A549 (cell line): ENCODE measurements at regions of chr19 and their contacts with region 1.

Region 1: DNA sequence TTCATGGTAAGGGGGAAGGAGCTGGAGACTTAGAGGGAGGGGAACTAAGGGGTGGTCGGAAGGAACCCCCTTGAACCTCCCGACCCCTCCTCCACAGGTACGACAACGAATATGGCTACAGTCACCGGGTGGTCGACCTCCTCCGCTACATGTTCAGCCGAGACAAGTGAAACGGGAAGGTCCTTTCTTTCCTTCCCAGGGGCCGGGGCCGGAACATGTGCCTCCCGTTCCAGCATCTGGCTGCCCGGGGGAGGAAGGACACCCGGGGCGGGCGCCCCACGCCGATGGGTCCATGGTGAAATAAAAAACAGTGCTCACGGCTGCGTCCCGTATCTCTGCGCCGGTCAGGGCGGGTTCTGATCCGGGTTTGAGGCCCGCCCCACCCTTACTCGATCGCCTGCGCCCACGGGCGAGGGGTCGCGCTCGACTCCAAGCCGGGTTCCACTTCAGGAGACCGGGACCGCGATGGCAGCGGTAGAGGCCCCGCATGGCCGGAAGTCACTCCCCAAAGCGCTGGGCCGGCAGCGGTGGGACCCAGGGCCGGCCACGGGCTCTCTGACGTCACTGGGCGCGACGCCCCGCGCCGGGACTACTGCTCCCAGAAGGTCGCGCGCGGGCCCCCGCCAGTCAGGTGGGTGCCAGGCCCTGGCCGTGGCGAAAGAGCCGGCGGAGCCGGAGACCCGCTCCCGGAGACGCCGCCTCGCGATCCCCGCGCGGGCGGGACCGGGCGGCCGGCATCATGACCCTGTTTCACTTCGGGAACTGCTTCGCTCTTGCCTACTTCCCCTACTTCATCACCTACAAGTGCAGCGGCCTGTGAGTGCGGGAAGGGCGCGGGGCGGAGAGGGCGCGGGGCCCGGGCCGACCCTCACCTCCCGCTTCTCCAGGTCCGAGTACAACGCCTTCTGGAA is at the start of gene TMEM147:
- DNase-seq: peak; percentile 95 to 100
- ATAC-seq: peak; percentile 88 to 95
- H3K4me3 ChIP-seq: peak within 1 kb of the TSS; percentile 86
- H3K27ac ChIP-seq: peak within 1 kb of the TSS; percentile 88 to 93
- H3K4me1 ChIP-seq: peaks cover 14% of the 10 kb centered on the region
- CTCF ChIP-seq: no peak
- EP300 ChIP-seq: no peak
- POLR2A ChIP-seq: peak; percentile 95
- RAD21 ChIP-seq: no peak
- polyA plus RNA-seq, gene TMEM147: 335 and 446 TPM in 2 replicates

Region 2: DNA sequence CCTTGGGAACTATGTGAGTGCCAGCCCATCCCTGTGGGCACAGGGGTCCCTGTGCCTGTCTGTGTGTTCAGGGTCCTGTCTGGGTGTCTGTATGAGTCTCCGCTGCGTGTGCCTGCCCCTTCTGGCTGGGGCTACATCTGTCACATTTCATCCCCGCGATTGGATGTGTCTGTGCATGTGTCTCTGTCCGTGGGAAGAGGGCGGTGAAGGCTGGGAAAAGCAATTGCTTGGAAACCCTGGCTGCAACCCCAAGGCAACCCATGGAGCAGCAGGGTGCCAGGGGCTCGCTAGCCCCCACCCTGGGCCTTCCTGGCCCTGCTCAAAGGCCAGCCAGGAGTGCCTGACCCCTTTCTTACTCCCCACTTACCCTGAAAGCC is 251.9 kb before region 1 on chr19:
- CTCF ChIA-PET with region 1: no interaction called
- POLR2A ChIA-PET with region 1: no interaction called
- DNase-seq: no peak
- ATAC-seq: peak; percentile 17 to 20; a peak in 3 of 6 replicates
- H3K4me3 ChIP-seq: no peak overlapping the region
- H3K27ac ChIP-seq: no peak overlapping the region
- H3K4me1 ChIP-seq: no peaks in the 10 kb centered on the region
- CTCF ChIP-seq: no peak
- EP300 ChIP-seq: no peak
- POLR2A ChIP-seq: no peak
- RAD21 ChIP-seq: no peak

Region 3: GRCh38 chr19:35509861-35510625 is 35.2 kb before region 1 on chr19:
- CTCF ChIA-PET with region 1: interaction called, 81 read pairs
- POLR2A ChIA-PET with region 1: interaction called, 4 read pairs
- DNase-seq: peak; percentile 73 to 99
- ATAC-seq: peak; percentile 68 to 90
- H3K4me3 ChIP-seq: peak overlapping the region; percentile 48
- H3K27ac ChIP-seq: peak overlapping the region; percentile 57 to 80
- H3K4me1 ChIP-seq: peaks cover 16% of the 10 kb centered on the region
- CTCF ChIP-seq: peak; percentile 100
- EP300 ChIP-seq: no peak
- POLR2A ChIP-seq: no peak; the same call in 1 of the 2 replicates
- RAD21 ChIP-seq: peak; percentile 70 to 81

Region 4: GRCh38 chr19:35557539-35558399 is 12.5 kb after region 1 on chr19:
- CTCF ChIA-PET with region 1: interaction called, 80 read pairs
- POLR2A ChIA-PET with region 1: interaction called, 7 read pairs
- DNase-seq: peak; percentile 83 to 89
- ATAC-seq: peak; percentile 42 to 81
- H3K4me3 ChIP-seq: peak overlapping the region; percentile 51
- H3K27ac ChIP-seq: peak overlapping the region in 1 of 2 experiments; percentile 62; a peak in 3 of 6 replicates
- H3K4me1 ChIP-seq: 0 out of 3 replicates have a peak, but pooled peaks cover 6% of the 10 kb centered on the region
- CTCF ChIP-seq: no peak
- EP300 ChIP-seq: no peak
- POLR2A ChIP-seq: no peak
- RAD21 ChIP-seq: no peak

Region 5: DNA sequence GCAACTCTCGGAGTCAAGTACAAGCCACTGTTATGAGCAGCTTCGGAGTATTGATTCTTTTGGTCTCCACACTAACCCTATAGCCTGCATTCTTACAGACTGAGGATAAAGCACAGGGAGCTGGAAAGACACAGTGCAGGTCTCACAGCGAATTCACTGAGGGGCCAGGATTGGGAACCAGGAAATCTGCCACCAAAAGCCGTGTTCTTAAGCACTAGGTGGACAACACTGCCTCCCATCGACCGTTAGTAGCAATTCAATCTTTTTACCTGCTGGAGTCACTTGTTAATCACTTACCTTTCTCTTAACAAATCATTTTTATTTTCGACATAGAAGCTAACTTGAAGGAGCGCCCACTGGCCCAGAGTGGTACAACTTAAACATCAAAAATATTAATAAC is 47.0 kb after region 1 on chr19:
- CTCF ChIA-PET with region 1: interaction called, 26 read pairs
- POLR2A ChIA-PET with region 1: no interaction called
- DNase-seq: peak; percentile 62 to 82
- ATAC-seq: no peak; a peak in 1 of 6 replicates
- H3K4me3 ChIP-seq: no peak overlapping the region
- H3K27ac ChIP-seq: no peak overlapping the region
- H3K4me1 ChIP-seq: no peaks in the 10 kb centered on the region
- CTCF ChIP-seq: peak; percentile 50
- EP300 ChIP-seq: no peak
- POLR2A ChIP-seq: no peak
- RAD21 ChIP-seq: peak; percentile 51 to 61

Region 6: DNA sequence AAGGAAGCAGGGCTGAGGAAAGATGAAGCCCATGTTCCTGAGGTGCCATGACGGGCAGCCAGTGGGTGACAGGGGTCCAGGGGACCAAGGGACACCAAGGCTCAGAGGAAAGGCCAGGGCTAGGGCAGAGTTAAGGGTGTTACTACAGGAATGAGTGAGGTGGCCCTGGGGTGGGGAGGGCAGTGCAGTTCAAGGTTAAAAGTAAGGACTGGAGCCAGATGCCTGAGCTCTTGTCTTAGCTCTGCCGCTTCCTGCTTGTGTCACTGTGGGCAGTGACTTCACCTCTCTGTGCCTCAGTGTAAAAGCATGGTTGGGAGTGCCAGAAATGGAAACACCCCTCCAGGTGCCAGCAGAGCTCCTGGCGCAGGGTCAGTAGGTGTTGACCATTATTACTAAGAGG is 91.4 kb after region 1 on chr19:
- CTCF ChIA-PET with region 1: interaction called, 27 read pairs
- POLR2A ChIA-PET with region 1: interaction called, 3 read pairs
- DNase-seq: no peak
- ATAC-seq: no peak
- H3K4me3 ChIP-seq: no peak overlapping the region
- H3K27ac ChIP-seq: no peak overlapping the region
- H3K4me1 ChIP-seq: no peaks in the 10 kb centered on the region
- CTCF ChIP-seq: no peak
- EP300 ChIP-seq: no peak
- POLR2A ChIP-seq: no peak; the same call in 1 of the 2 replicates
- RAD21 ChIP-seq: no peak

Region 7: DNA sequence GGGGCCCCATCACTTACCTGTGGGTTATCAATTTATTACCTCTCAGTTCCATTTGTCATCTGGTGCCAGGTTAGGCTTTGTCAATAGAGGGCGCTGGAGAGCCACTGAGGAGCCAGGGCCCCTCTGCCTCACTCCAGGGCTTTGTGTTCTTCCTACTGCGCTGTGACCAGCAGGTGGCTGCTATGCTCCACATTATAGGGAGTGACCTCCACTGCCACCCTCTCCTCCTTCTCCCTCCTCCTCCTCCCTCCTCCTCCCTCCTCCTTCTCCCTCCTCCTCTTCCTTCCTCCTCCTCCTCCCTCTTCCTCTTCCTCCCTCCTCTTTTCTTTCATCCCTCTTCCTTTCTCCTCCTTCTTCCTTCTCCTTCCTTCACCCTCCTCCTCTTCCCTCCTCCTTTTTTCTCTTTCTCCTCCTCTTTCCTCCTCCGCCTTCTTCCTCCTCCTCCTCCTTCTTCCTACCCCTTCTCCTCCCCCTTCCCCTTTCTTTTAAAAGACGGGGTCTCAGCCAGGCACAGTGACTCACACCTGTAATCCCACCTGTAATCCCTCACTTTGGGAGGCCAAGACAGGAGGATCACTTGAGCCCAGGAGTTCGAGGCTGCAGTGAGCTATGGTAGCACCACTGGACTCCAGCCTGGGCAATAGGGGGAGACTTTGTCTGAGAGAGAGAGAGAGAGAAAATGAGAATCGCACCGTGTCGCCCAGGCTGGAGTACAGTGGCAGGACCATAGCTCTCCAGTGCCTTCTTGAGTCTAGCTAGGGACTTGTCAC is 148.8 kb after region 1 on chr19:
- CTCF ChIA-PET with region 1: interaction called, 11 read pairs
- POLR2A ChIA-PET with region 1: no interaction called
- DNase-seq: peak; percentile 95 to 97
- ATAC-seq: peak; percentile 99
- H3K4me3 ChIP-seq: no peak overlapping the region
- H3K27ac ChIP-seq: 0 out of 6 replicates have a peak overlapping the region, but pooled peaks of 1 of the 2 experiments have one; percentile 4
- H3K4me1 ChIP-seq: no peaks in the 10 kb centered on the region
- CTCF ChIP-seq: peak; percentile 100
- EP300 ChIP-seq: no peak
- POLR2A ChIP-seq: no peak
- RAD21 ChIP-seq: peak; percentile 99 to 100